PC-3 (cell line): ENCODE measurements at regions of chr15 and their contacts with region 1.

Region 1: DNA sequence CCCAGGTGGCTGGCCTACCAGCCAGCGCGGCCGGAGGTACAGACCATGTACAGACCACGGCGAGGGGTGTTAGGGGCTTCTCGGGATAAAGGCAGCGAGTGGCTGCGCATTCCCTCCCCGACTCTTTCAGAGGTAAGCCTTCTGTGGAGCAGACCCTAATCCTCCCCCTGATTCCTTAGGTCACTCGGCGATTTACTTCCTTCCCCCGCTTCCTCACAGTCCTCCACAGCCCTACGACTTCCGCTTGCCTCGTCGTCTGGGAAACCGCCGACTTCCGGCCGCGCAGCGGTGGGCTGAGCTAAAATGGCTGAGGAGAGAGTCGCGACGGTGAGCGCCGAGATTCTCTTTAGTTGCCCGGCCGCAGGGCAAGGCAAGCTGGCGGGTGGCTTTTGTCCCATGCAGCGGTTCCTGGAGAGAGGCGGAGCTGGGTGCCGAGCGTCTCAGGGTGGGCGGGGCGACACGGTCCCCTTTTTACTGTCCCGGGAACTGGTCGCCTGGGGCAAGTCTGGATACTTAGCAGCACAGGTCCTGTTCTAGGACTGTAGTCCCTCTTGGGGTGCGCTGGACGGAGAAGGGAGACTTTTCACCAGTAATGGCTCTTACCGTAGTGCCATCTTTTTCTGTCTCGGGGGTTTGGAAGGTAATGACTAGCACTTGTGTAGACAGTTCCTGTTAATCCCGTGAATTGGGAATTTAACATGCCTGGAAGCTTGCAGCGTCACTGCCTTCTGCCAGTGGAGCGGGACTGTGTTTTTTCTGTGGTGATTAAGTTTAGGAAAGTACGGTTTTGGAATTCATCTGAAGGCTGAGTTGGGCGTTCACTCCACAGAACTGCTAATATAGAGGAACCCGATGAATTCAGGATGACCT is at the starts of genes BBS4 and HIGD2B:
- DNase-seq: peak; percentile 89
- ATAC-seq: peak; percentile 95
- H3K4me3 ChIP-seq: peak within 1 kb of the TSS; percentile 93
- H3K27ac ChIP-seq: peak within 1 kb of the TSS; percentile 64
- H3K4me1 ChIP-seq: peaks cover 7% of the 10 kb centered on the region
- H3K27me3 ChIP-seq: no peaks in the 10 kb centered on the region
- CTCF ChIP-seq: no peak
- total RNA-seq, gene BBS4: 7.5 and 18.7 TPM in 2 replicates
- total RNA-seq, gene HIGD2B: 0.11 TPM in 1 of 2 replicates, not detected in the other

Region 2: DNA sequence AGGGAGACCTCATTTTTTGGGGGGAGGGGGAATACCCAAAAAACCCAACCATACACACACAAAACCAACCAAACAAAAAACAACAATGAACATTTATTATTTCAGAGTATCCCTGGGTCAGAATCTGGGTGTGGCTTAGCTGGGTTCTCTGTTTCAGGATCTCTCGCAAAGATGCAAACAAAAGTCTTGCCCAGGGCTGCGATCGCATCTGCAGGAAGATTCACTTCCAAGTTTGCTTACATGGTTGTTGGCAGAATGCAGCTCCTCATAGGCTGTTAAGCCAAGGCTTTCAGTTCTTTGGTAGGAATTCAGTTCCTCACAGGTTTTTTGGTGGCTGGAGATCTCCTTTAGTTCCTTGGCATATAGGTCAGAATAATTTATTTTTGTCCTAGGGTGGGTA is 225.8 kb before region 1 on chr15:
- CTCF ChIA-PET with region 1: no interaction called
- POLR2A ChIA-PET with region 1: interaction called, 22 read pairs
- intact Hi-C with region 1: no loop called
- DNase-seq: no peak
- ATAC-seq: no peak
- H3K4me3 ChIP-seq: no peak overlapping the region
- H3K27ac ChIP-seq: no peak overlapping the region
- H3K4me1 ChIP-seq: no peaks in the 10 kb centered on the region
- H3K27me3 ChIP-seq: no peaks in the 10 kb centered on the region
- CTCF ChIP-seq: no peak

Region 3: GRCh38 chr15:72599855-72600464 is 86.2 kb before region 1 on chr15:
- CTCF ChIA-PET with region 1: no interaction called
- POLR2A ChIA-PET with region 1: no interaction called
- intact Hi-C with region 1: loop called (anchors 5 kb)
- DNase-seq: peak; percentile 67
- ATAC-seq: peak; percentile 76
- H3K4me3 ChIP-seq: no peak overlapping the region
- H3K27ac ChIP-seq: no peak overlapping the region
- H3K4me1 ChIP-seq: no peaks in the 10 kb centered on the region
- H3K27me3 ChIP-seq: no peaks in the 10 kb centered on the region
- CTCF ChIP-seq: peak; percentile 76

Region 4: GRCh38 chr15:72994534-72995177 is 308.5 kb after region 1 on chr15:
- CTCF ChIA-PET with region 1: no interaction called
- POLR2A ChIA-PET with region 1: no interaction called
- intact Hi-C with region 1: no loop called
- DNase-seq: no peak
- ATAC-seq: no peak
- H3K4me3 ChIP-seq: no peak overlapping the region
- H3K27ac ChIP-seq: no peak overlapping the region
- H3K4me1 ChIP-seq: peaks cover 4% of the 10 kb centered on the region
- H3K27me3 ChIP-seq: peaks cover 42% of the 10 kb centered on the region
- CTCF ChIP-seq: no peak